A549 (cell line): ENCODE measurements at regions of chr16 and their contacts with region 1.

Region 1: GRCh38 chr16:18801197-18801972 is at the start of gene ARL6IP1:
- DNase-seq: peak; percentile 97 to 100
- ATAC-seq: peak; percentile 93 to 95
- H3K4me3 ChIP-seq: peak within 1 kb of the TSS; percentile 92
- H3K27ac ChIP-seq: peak within 1 kb of the TSS; percentile 87 to 94
- H3K4me1 ChIP-seq: peaks cover 61% of the 10 kb centered on the region
- CTCF ChIP-seq: peak; percentile 87
- EP300 ChIP-seq: no peak
- POLR2A ChIP-seq: peak; percentile 100
- RAD21 ChIP-seq: peak; percentile 49 to 63
- polyA plus RNA-seq, gene ARL6IP1: 403 and 479 TPM in 2 replicates

Region 2: DNA sequence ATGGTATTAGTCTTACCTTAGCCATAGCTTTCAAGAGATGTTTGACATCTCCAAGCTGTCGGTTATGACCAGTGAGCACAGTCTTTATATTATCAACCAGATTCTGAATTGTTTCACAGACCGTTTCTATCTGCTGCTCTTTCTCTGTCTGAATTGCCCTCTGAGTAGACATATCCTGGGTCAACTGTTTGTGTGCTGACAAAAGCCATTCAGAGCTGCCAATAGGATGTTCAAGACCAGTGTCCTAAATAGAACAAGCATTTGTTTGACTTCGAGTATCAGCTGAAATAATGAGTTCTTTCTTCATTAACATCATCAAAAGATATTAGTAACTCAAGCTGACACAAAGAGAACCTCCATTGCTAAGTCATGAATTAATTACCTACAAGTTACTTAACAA is 14.9 kb after region 1 on chr16:
- CTCF ChIA-PET with region 1: interaction called, 22 read pairs
- POLR2A ChIA-PET with region 1: interaction called, 18 read pairs
- DNase-seq: no peak
- ATAC-seq: no peak
- H3K4me3 ChIP-seq: no peak overlapping the region
- H3K27ac ChIP-seq: no peak overlapping the region
- H3K4me1 ChIP-seq: no peaks in the 10 kb centered on the region
- CTCF ChIP-seq: no peak
- EP300 ChIP-seq: no peak
- POLR2A ChIP-seq: no peak
- RAD21 ChIP-seq: no peak

Region 3: DNA sequence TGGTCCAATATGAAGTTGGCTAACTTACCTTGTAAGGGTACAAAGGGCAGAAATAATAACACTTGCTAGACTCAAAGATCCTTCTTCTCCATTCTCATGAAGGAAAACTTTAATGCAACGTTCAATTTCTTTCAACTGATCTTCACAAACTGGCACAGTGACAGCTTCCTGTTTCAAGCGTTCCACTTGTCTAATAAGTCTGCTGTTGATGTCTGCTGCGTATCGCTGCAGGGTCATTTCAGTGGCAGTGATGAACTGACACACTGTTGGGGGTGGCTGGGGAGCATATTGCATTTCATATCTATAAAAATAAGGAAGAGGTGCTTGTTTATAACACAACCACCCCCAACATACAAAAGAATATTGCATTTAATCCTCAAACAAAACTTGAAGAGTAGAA is 33.5 kb after region 1 on chr16:
- CTCF ChIA-PET with region 1: interaction called, 14 read pairs
- POLR2A ChIA-PET with region 1: interaction called, 8 read pairs
- DNase-seq: peak in 1 of 2 experiments; percentile 22
- ATAC-seq: no peak
- H3K4me3 ChIP-seq: no peak overlapping the region
- H3K27ac ChIP-seq: no peak overlapping the region
- H3K4me1 ChIP-seq: no peaks in the 10 kb centered on the region
- CTCF ChIP-seq: no peak
- EP300 ChIP-seq: no peak
- POLR2A ChIP-seq: no peak
- RAD21 ChIP-seq: no peak

Region 4: DNA sequence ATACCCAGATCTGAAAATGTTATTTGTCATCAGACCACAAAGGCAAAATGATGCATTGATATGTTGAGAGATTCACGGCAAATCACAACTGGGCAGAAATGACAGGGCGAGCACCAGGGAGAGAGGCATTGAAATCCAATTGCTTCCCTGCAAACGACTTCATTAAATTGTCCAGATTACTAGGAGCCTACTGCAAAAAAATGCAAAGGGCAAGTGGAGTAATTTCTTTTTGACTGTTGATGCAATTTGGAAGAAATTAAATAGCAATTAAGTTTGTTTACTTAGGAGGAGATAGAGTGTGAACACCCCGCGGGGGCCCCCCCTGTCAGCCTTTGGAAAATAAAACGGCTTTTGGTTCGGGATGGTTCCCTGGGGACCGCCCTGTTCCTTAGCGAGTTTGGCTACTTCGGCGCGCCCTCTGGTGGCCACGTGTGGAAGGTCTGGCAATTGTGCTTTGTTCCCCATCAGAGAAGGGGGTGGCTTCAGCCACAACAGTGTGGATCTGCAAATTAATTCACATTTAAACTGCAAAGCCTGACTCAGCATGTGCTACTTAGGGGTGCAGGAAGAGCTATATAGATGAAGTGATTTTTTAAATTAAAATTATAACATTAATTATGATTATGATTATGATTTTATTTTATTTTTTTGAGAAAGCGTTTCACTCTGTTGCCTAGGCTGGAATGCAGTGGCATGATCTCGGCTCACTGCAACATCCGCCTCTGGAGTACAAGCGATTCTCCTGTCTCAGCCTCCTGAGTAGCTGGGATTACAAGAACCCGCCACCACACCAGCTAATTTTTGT is 167.9 kb after region 1 on chr16:
- CTCF ChIA-PET with region 1: interaction called, 16 read pairs
- POLR2A ChIA-PET with region 1: interaction called, 3 read pairs
- DNase-seq: peak; percentile 75 to 94
- ATAC-seq: peak; percentile 97 to 99
- H3K4me3 ChIP-seq: peak overlapping the region; percentile 34; the same call in 2 of the 3 replicates
- H3K27ac ChIP-seq: 0 out of 6 replicates have a peak overlapping the region, but pooled peaks of 1 of the 2 experiments have one; percentile 6
- H3K4me1 ChIP-seq: 0 out of 3 replicates have a peak, but pooled peaks cover 4% of the 10 kb centered on the region
- CTCF ChIP-seq: peak; percentile 92
- EP300 ChIP-seq: no peak
- POLR2A ChIP-seq: no peak
- RAD21 ChIP-seq: peak; percentile 91 to 93